Posterior vena cava (tissue), 2 donors: ENCODE measurements at regions of chrX and their contacts with region 1.

Region 1: GRCh38 chrX:3648084-3648483 is 65.4 kb downstream of the PRKX start:
- DNase-seq: no peak

Region 2: GRCh38 chrX:2707334-2707760 is 940.7 kb before region 1 on chrX:
- intact Hi-C with region 1: loop called in 1 of 2 experiments (anchors 5 kb)
- DNase-seq: peak; percentile 89

Region 3: GRCh38 chrX:3585719-3586118 is 62.4 kb before region 1 on chrX:
- intact Hi-C with region 1: no loop called
- DNase-seq: no peak

Region 4: DNA sequence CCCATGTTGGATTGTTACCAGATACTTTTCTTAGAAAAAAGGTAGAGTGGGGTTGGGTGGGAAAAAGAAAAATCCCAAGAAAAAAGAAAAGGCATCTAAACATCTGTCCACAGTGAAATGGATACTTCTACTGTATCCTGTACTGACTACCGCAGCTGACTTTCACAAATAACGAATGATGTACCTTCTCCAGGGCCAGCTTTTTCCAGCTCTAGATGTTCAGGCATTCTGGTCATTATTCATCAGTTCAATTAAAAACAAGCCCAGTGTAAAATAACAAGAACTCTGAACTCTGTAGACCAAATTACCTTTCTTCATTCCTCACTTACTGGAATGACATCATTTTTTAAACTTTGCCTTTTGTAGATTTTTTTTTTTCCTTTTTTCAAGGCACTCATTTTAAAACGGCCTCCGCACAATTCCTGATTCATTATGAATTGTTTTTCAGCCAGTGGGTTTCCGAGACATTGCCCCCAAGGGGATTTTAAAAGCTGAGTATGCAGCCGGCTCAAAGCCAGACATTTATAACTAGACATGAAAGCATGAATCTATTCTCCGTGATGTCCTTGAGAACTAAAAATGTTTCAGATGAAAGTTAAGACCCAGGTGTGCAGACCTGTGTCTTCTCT is 48.2 kb before region 1 on chrX:
- intact Hi-C with region 1: no loop called
- DNase-seq: no peak